Endothelial cell of umbilical vein (primary cell): ENCODE measurements at regions of chr14 and their contacts with region 1.

Region 1: GRCh38 chr14:38867561-38868150 is 235.4 kb downstream of the SEC23A start:
- DNase-seq: peak; percentile 86
- H3K4me3 ChIP-seq: no peak overlapping the region
- H3K27ac ChIP-seq: no peak overlapping the region
- H3K4me1 ChIP-seq: peaks cover 5% of the 10 kb centered on the region
- H3K27me3 ChIP-seq: no peaks in the 10 kb centered on the region
- CTCF ChIP-seq: peak; percentile 75 to 88
- POLR2A ChIP-seq: no peak

Region 2: GRCh38 chr14:37903343-37904191 is 964.1 kb before region 1 on chr14:
- CTCF ChIA-PET with region 1: interaction called, 20 read pairs
- POLR2A ChIA-PET with region 1: no interaction called
- dilution Hi-C with region 1: no loop called
- intact Hi-C with region 1: loop called (anchors 1 kb)
- DNase-seq: peak; percentile 64
- H3K4me3 ChIP-seq: no peak overlapping the region
- H3K27ac ChIP-seq: no peak overlapping the region
- H3K4me1 ChIP-seq: peaks cover 3% of the 10 kb centered on the region
- H3K27me3 ChIP-seq: peaks cover 22 to 23% of the 10 kb centered on the region in 2 experiments
- CTCF ChIP-seq: peak; percentile 33 to 45
- POLR2A ChIP-seq: no peak

Region 3: GRCh38 chr14:37985826-37986470 is 881.7 kb before region 1 on chr14:
- CTCF ChIA-PET with region 1: interaction called, 8 read pairs
- POLR2A ChIA-PET with region 1: no interaction called
- dilution Hi-C with region 1: no loop called
- intact Hi-C with region 1: loop called (anchors 1 kb)
- DNase-seq: peak; percentile 67
- H3K4me3 ChIP-seq: no peak overlapping the region
- H3K27ac ChIP-seq: no peak overlapping the region
- H3K4me1 ChIP-seq: no peaks in the 10 kb centered on the region
- H3K27me3 ChIP-seq: no peaks in the 10 kb centered on the region
- CTCF ChIP-seq: peak; percentile 63 to 83
- POLR2A ChIP-seq: no peak

Region 4: DNA sequence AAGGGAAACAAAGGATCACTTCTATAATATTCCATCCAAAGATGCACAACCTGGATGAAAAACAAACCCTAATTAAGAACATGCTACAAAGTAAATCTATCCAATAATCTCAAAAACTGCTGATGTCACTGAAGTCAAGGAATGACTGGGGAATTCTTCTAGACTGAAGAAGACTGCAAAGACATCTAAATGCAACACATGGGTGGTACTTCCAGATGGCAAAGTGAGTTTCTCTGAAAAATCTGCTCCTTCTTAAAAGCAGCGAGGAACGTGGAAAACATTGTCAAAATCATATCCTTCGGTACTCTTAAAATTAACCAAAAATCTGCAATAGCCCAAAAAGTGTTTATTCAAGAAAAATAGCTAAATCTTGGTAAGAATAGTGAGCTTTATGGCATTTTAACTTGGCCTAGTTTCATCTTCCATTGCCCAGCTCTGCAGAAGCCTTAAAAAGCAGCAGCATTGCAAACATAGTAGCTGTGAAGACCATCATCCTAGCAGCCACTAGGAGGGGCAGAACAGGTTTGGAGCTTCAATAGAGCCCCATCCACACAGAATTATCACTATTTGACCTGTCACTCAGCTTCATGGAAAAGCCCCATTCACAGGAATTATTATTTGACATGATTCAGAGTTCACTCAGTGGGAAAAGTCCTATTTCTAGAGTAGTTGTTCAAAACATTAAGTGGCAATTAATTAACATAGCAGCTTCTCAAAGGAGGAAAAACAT is 619.2 kb before region 1 on chr14:
- CTCF ChIA-PET with region 1: no interaction called
- POLR2A ChIA-PET with region 1: no interaction called
- dilution Hi-C with region 1: no loop called
- intact Hi-C with region 1: loop called (anchors 2 kb)
- DNase-seq: peak; percentile 39
- H3K4me3 ChIP-seq: no peak overlapping the region
- H3K27ac ChIP-seq: no peak overlapping the region
- H3K4me1 ChIP-seq: peaks cover 27% of the 10 kb centered on the region
- H3K27me3 ChIP-seq: no peaks in the 10 kb centered on the region
- CTCF ChIP-seq: peak; percentile 30
- POLR2A ChIP-seq: peak; percentile 39

Region 5: DNA sequence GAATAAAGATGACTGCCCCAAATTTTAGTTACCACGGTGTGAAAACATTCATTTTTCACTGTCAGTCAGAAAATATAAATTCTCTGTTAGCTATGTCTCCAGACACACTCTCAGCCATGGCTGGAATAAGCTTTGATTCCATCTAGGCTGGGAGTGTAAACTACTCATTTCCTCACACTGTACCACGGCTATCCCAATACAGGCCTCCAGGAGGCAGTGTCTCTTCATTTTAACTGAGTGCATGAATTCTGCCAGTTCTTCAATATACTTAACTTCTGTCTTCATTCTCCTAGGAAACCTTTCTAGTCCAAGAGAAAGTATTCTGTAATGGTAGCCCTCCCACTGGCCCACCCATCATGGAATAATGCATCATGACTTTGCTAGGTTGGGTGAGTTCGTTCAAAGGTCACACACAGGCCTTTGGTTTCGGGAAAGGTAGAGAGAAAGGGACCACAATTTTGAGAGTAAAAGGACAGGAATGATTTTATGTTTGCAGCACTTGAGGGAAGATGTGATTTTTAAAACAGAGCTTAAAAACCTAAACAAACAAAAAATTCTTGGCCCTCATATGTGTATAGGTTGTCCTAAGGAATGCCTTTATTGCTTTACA is 145.7 kb before region 1 on chr14:
- CTCF ChIA-PET with region 1: interaction called, 209 read pairs
- POLR2A ChIA-PET with region 1: no interaction called
- dilution Hi-C with region 1: loop called (anchors 25 kb)
- intact Hi-C with region 1: loop called (anchors 1 kb)
- DNase-seq: peak; percentile 89
- H3K4me3 ChIP-seq: no peak overlapping the region
- H3K27ac ChIP-seq: no peak overlapping the region
- H3K4me1 ChIP-seq: no peaks in the 10 kb centered on the region
- H3K27me3 ChIP-seq: no peaks in the 10 kb centered on the region
- CTCF ChIP-seq: peak; percentile 72 to 78
- POLR2A ChIP-seq: no peak

Region 6: DNA sequence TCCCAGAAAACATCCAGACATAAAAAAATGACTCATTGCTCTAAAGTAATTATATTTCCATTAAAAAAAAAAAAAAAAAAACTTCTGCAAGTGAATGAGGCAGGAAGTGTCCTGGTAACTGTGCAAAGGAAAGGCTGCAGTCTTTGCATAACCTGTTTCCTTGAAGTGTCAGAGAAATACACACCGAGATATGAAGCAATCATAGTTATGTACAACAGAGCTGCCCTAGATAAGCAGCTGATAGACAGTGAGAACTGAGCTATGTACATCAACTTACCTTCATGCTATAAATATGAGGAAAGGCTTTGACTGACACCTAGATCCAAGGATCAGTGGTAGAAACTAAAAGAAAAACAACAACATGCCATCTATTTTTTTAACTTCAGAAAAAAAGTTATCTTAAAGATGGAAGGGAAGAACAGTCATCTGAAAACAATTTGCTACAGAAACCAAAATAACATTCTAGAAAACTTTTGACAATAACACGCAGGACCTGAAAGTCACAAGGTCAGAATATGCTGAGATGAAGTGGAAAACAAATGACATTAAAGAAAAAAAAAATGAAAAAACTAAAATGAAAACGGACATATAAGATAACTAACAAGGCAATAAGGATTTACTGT is 27.8 kb before region 1 on chr14:
- CTCF ChIA-PET with region 1: no interaction called
- POLR2A ChIA-PET with region 1: interaction called, 4 read pairs
- dilution Hi-C with region 1: no loop called
- intact Hi-C with region 1: loop called (anchors 2 kb)
- DNase-seq: peak; percentile 94
- H3K4me3 ChIP-seq: peak overlapping the region in 1 of 3 experiments; percentile 12
- H3K27ac ChIP-seq: peak overlapping the region; percentile 74
- H3K4me1 ChIP-seq: peaks cover 36% of the 10 kb centered on the region
- H3K27me3 ChIP-seq: no peaks in the 10 kb centered on the region
- CTCF ChIP-seq: no peak
- POLR2A ChIP-seq: no peak

Region 7: GRCh38 chr14:38989922-38990546 is 122.4 kb after region 1 on chr14:
- CTCF ChIA-PET with region 1: interaction called, 10 read pairs
- POLR2A ChIA-PET with region 1: no interaction called
- dilution Hi-C with region 1: no loop called
- intact Hi-C with region 1: loop called (anchors 2 kb)
- DNase-seq: peak; percentile 15
- H3K4me3 ChIP-seq: no peak overlapping the region
- H3K27ac ChIP-seq: no peak overlapping the region
- H3K4me1 ChIP-seq: peaks cover 38% of the 10 kb centered on the region
- H3K27me3 ChIP-seq: no peaks in the 10 kb centered on the region
- CTCF ChIP-seq: no peak
- POLR2A ChIP-seq: no peak